Activated CD4-positive, alpha-beta memory T cell treated with anti-CD3 and anti-CD28 coated beads, Interleukin-2, amount 10 ng/mL, durations not matched to agents 7 days and 5 days (primary cell): ENCODE measurements at regions of chr2 and their contacts with region 1.

Region 1: DNA sequence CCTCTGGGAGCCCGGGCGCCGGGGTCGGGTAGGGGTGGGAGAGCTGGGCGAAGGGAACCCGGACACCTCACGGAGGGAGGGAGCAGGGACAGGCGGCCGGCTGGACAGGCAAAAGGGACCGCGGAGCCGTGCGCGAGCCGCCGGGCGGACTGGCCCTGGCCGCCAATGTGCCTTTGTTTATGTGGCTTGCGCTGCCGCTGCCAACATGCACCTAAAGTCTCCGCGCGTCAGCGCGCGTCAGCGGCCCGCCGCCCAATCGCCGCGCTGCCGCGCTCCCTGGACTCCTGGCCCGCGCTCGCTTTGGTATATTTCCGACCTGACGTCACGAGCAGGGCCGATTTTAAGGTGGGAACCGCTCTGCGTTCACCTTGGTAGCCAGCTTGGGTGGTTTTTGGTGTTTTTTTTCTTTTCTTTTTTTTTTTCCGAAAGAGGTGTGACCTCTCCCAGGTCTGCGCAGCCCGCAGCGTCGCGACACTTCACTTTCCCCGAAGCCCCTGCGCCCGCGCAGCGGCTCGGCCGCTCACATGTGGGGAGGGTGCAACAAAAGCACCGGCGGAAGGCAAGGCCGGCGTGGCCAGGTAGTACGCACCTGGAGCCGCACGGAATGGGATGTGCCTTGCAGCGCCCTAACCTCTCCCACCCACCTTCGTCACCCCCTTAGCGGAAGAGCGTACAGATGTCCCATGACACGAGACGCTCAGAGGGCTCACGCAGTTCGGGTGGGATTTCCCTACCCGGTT is at the start of gene NR4A2:
- DNase-seq: peak; percentile 88
- H3K4me3 Mint-ChIP-seq: peak within 1 kb of the TSS; percentile 90
- H3K27ac Mint-ChIP-seq: peak within 1 kb of the TSS; percentile 84
- H3K4me1 Mint-ChIP-seq: peaks cover 29% of the 10 kb centered on the region
- H3K27me3 Mint-ChIP-seq: peaks cover 32% of the 10 kb centered on the region
- total RNA-seq, gene NR4A2: 3.4 to 3.8 TPM

Region 2: DNA sequence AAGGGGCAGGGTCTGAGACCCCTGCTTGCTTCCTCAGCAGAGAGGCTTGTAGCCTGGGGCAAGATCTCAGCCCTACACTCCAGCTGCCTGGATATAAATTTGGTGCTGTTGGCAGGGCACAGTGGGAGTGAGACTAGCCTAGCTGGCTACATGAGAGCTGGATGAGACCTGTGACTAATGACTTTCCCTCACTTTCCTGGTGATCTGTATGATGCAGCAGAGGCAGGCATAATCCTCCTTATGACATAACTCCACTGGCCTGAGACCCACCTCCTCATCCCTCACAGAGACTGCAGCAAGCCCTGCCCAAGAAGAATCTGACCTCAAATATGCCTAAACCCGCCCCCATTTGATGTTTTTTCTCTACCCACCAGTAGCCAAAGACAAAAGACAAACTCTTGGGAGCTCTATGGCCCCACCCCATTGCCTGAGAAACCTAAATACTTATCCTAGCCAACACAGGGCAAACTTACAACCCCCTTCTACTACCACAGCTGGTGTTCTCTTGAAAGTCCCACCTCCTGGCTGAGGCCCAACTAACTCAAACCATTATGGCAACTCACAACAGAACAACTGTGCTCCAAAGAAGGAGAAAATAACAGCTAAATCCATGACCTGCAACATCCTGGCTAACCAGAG is 102.9 kb before region 1 on chr2:
- CTCF ChIA-PET with region 1: no interaction called
- POLR2A ChIA-PET with region 1: no interaction called
- DNase-seq: no peak
- H3K4me3 Mint-ChIP-seq: no peak overlapping the region
- H3K27ac Mint-ChIP-seq: no peak overlapping the region
- H3K4me1 Mint-ChIP-seq: no peaks in the 10 kb centered on the region
- H3K27me3 Mint-ChIP-seq: peaks cover 2% of the 10 kb centered on the region

Region 3: DNA sequence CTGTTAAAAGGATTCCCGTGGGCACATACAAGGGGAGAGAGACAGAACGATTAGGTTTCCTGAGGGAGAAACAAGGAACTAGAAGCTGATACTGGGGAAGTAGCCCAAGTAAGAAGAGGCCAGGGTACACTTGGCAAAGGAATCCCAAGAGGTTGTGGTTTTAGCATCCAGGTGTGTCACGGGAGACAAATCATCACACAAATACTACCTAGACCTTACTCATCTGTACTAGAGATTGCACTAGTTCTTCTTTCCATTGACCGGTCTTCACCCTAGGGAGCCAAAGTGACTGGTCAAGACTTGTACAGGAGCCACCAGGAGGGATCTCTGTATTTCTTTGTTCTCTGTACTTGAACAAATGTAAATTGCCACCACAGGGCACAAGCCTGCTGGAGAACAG is 14.0 kb after region 1 on chr2:
- CTCF ChIA-PET with region 1: interaction called, 18 read pairs
- POLR2A ChIA-PET with region 1: interaction called, 103 read pairs
- DNase-seq: no peak
- H3K4me3 Mint-ChIP-seq: no peak overlapping the region
- H3K27ac Mint-ChIP-seq: no peak overlapping the region
- H3K4me1 Mint-ChIP-seq: peaks cover 15% of the 10 kb centered on the region
- H3K27me3 Mint-ChIP-seq: no peaks in the 10 kb centered on the region

Region 4: DNA sequence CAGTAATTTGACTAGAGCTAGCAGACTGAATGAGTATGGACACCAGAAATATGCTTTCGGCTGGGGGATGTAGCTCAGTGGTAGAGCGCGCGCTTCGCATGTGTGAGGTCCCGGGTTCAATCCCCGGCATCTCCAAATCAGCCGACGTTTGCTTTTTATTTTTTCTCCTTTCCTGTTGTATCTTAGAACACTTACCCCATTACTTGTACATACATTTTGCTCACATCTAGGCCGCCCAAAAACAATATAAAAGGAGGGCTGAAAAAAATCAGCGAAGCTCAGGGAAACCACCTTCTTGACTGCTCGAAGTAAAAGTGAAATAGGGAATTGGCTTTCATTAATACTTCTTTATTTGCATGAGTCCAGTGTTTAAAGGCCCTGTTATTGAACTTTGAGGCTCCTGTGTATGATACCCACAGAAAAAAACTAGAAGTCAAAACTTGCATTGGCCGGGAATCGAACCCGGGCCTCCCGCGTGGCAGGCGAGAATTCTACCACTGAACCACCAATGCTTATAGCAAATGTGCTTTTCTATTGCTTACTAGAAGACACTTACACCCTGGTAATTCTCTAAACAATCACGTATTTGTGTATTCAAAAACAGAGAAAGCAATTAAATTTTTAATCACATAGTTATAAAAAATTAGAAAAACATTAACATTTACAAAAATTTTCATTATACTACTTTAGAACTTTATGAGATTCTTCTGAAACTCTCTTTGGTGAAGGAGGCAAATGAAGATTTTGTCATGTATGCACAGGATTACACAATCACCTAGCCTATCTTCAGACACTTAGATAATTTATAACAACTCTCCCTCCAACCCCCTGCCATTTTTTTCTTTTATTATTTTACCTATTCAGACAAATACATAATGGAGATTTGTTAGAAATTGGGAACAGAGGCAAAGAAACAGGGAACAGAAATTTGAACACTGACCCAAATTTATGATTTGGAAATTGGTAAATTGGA is 68.3 kb after region 1 on chr2:
- CTCF ChIA-PET with region 1: interaction called, 21 read pairs
- POLR2A ChIA-PET with region 1: interaction called, 40 read pairs
- DNase-seq: peak; percentile 80
- H3K4me3 Mint-ChIP-seq: peak overlapping the region; percentile 73
- H3K27ac Mint-ChIP-seq: peak overlapping the region; percentile 81
- H3K4me1 Mint-ChIP-seq: peaks cover 30% of the 10 kb centered on the region
- H3K27me3 Mint-ChIP-seq: no peaks in the 10 kb centered on the region

Region 5: GRCh38 chr2:156435715-156436496 is 103.2 kb after region 1 on chr2 and contains the start of gene GPD2:
- CTCF ChIA-PET with region 1: interaction called, 10 read pairs
- POLR2A ChIA-PET with region 1: interaction called, 13 read pairs
- DNase-seq: peak; percentile 64
- H3K4me3 Mint-ChIP-seq: peak within 1 kb of the TSS; percentile 89
- H3K27ac Mint-ChIP-seq: peak within 1 kb of the TSS; percentile 71
- H3K4me1 Mint-ChIP-seq: peaks cover 43% of the 10 kb centered on the region
- H3K27me3 Mint-ChIP-seq: no peaks in the 10 kb centered on the region
- total RNA-seq, gene GPD2: 20.5 to 27.3 TPM

Region 6: GRCh38 chr2:156589381-156590079 is 256.8 kb after region 1 on chr2:
- CTCF ChIA-PET with region 1: interaction called, 35 read pairs
- POLR2A ChIA-PET with region 1: interaction called, 8 read pairs
- DNase-seq: peak; percentile 19
- H3K4me3 Mint-ChIP-seq: no peak overlapping the region
- H3K27ac Mint-ChIP-seq: no peak overlapping the region
- H3K4me1 Mint-ChIP-seq: peaks cover 2% of the 10 kb centered on the region
- H3K27me3 Mint-ChIP-seq: no peaks in the 10 kb centered on the region